Activated CD4-positive, alpha-beta T cell treated with anti-CD3 and anti-CD28 coated beads for 36 hours (primary cell): ENCODE measurements at regions of chr6 and their contacts with region 1.

Region 1: DNA sequence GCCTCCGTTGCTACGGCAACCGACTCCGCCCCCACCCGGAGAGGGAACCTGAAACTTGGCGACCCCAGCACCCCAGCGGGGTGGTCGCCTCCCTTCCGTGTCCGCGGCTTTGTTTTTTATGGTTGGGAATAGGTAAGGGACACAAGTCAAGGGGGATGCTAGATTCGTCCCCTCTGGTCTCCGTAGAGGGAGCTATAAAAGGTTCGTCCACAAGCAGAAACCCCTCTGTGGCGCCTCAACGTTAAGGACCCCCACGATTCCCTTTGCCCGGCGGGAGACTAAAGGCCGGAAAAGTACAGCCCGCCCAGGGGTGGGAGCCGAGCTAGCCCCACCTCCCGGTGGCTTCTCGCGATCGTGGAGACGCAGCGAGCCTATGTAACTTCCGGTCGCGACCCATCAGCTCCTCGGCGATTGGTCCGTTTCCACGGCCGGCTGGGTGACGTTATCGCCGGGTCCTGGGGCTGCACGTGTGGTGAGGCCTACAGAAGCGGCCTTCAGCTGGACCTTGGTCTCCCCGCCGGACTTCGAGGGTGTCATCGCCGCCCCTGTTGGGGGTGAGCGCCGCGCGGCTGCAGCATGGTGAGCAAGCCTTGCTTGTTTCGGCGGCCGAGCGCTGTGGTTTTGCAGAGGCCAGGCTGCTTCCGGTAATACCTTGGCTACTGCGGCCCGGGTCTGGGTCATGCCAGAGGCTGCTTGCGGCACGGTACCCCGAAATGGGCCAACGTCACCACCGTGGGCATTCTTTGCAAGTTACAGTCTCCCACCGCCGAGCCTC is at the start of gene LTV1:
- DNase-seq: peak; percentile 96
- ATAC-seq: peak; percentile 99
- H3K4me3 Mint-ChIP-seq: peak within 1 kb of the TSS; percentile 93
- H3K27ac Mint-ChIP-seq: peak within 1 kb of the TSS; percentile 96
- H3K4me1 Mint-ChIP-seq: peaks cover 34% of the 10 kb centered on the region
- H3K27me3 Mint-ChIP-seq: no peaks in the 10 kb centered on the region
- total RNA-seq, gene LTV1: 34.3 to 36.3 TPM

Region 2: GRCh38 chr6:142146828-142147662 is 1696.0 kb before region 1 on chr6 and contains the starts of genes NMBR and VTA1:
- CTCF ChIA-PET with region 1: no interaction called
- POLR2A ChIA-PET with region 1: no interaction called
- intact Hi-C with region 1: loop called in 1 of 2 experiments (anchors 5 kb)
- DNase-seq: peak; percentile 98
- ATAC-seq: peak; percentile 98
- H3K4me3 Mint-ChIP-seq: peak within 1 kb of the TSS; percentile 97
- H3K27ac Mint-ChIP-seq: peak within 1 kb of the TSS; percentile 95
- H3K4me1 Mint-ChIP-seq: peaks cover 56% of the 10 kb centered on the region
- H3K27me3 Mint-ChIP-seq: no peaks in the 10 kb centered on the region
- total RNA-seq, gene NMBR: not detected
- total RNA-seq, gene VTA1: 55.6 to 73.9 TPM

Region 3: GRCh38 chr6:143510991-143511891 is 331.8 kb before region 1 on chr6 and contains the start of gene FUCA2:
- CTCF ChIA-PET with region 1: interaction called, 3 read pairs
- POLR2A ChIA-PET with region 1: no interaction called
- intact Hi-C with region 1: loop called in 1 of 2 experiments (anchors 2 kb)
- DNase-seq: peak; percentile 80
- ATAC-seq: peak; percentile 85
- H3K4me3 Mint-ChIP-seq: peak within 1 kb of the TSS; percentile 84
- H3K27ac Mint-ChIP-seq: peak within 1 kb of the TSS; percentile 91
- H3K4me1 Mint-ChIP-seq: peaks cover 22% of the 10 kb centered on the region
- H3K27me3 Mint-ChIP-seq: no peaks in the 10 kb centered on the region
- total RNA-seq, gene FUCA2: 6.7 to 7.8 TPM

Region 4: DNA sequence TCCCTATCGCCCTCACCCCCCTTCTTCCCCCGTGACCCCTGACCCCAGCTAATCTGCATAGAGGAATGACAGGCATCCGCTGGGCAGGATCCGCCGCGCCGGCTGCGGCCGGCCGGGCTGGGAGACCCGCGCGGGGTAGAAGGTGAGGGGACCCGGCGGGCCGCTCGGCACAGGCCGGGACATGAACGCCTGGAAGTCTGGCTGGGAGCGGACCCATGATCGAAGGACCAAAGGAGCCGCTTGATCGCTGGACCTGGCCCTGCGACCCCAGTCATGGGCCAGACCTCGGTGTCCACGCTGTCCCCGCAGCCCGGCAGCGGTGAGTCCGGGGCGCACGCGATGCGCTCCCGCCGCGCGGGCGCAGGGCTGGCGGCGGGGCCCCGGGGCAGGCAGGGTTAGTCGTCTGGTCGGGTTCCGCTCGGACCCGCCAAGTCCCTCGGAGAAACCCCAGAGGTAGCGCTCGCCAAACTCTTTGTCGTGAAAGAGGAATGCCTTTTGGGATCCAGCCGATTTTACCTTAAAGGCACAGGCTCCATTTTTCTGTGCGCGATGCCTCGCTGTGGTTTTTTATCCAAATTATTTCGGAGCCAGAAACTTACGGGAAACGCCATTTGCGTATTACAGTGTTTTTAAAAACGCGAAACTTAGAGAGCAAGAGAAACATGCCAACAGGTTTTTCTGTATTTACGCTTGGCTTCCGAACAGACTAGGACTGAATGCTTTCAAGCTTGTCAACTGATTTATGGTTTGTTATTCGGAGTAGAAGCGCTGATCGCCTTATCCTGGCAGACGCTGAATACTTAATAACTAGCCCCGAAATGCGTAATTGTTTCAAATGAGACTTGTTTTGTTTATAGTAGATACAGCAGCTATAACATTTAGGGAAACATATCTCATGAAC is 164.9 kb before region 1 on chr6 and contains the start of gene PHACTR2:
- CTCF ChIA-PET with region 1: no interaction called
- POLR2A ChIA-PET with region 1: no interaction called
- intact Hi-C with region 1: loop called (anchors 2 to 5 kb)
- DNase-seq: peak; percentile 80
- ATAC-seq: peak; percentile 90
- H3K4me3 Mint-ChIP-seq: peak within 1 kb of the TSS; percentile 77
- H3K27ac Mint-ChIP-seq: peak within 1 kb of the TSS; percentile 74
- H3K4me1 Mint-ChIP-seq: peaks cover 22% of the 10 kb centered on the region
- H3K27me3 Mint-ChIP-seq: peaks cover 2% of the 10 kb centered on the region
- total RNA-seq, gene PHACTR2: 21.2 to 27.0 TPM

Region 5: DNA sequence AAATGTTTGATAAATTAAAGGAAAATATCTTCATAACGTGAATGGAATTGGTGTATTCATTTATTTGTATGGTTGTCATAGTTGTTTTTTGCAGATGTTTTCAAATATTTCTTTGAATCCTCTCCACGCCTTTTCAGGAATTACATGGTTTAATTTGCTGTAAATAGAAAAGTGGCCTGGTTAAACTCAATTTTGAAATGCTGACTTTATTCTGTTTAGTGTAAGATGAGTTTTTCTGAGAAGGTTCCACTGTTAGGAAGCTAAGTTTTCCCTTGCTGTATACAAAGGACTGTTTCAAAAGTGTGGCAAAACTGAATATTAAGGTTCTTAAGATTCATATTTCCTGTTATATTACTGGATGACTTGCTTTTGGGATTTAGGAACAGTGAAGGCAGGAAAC is 20.7 kb after region 1 on chr6:
- CTCF ChIA-PET with region 1: interaction called, 3 read pairs
- POLR2A ChIA-PET with region 1: interaction called, 3 read pairs
- intact Hi-C with region 1: loop called in 1 of 2 experiments (anchors 2 kb)
- DNase-seq: no peak
- ATAC-seq: no peak
- H3K4me3 Mint-ChIP-seq: no peak overlapping the region
- H3K27ac Mint-ChIP-seq: no peak overlapping the region
- H3K4me1 Mint-ChIP-seq: no peaks in the 10 kb centered on the region
- H3K27me3 Mint-ChIP-seq: no peaks in the 10 kb centered on the region

Region 6: GRCh38 chr6:144063744-144064401 is 220.8 kb after region 1 on chr6:
- CTCF ChIA-PET with region 1: interaction called, 3 read pairs
- POLR2A ChIA-PET with region 1: interaction called, 4 read pairs
- intact Hi-C with region 1: loop called in 1 of 2 experiments (anchors 1 kb)
- DNase-seq: peak; percentile 93
- ATAC-seq: peak; percentile 90
- H3K4me3 Mint-ChIP-seq: peak overlapping the region; percentile 81
- H3K27ac Mint-ChIP-seq: peak overlapping the region; percentile 80
- H3K4me1 Mint-ChIP-seq: peaks cover 46% of the 10 kb centered on the region
- H3K27me3 Mint-ChIP-seq: peaks cover 11% of the 10 kb centered on the region

Region 7: GRCh38 chr6:144149891-144150709 is 307.0 kb after region 1 on chr6 and contains the start of gene STX11:
- CTCF ChIA-PET with region 1: no interaction called
- POLR2A ChIA-PET with region 1: no interaction called
- intact Hi-C with region 1: loop called in 1 of 2 experiments (anchors 1 kb)
- DNase-seq: peak; percentile 91
- ATAC-seq: peak; percentile 80
- H3K4me3 Mint-ChIP-seq: peak within 1 kb of the TSS; percentile 84
- H3K27ac Mint-ChIP-seq: peak within 1 kb of the TSS; percentile 95
- H3K4me1 Mint-ChIP-seq: peaks cover 41% of the 10 kb centered on the region
- H3K27me3 Mint-ChIP-seq: peaks cover 5% of the 10 kb centered on the region
- total RNA-seq, gene STX11: 19.6 to 20.9 TPM

Region 8: GRCh38 chr6:144195679-144196270 is 352.7 kb after region 1 on chr6:
- CTCF ChIA-PET with region 1: no interaction called
- POLR2A ChIA-PET with region 1: no interaction called
- intact Hi-C with region 1: no loop called
- DNase-seq: no peak
- ATAC-seq: no peak
- H3K4me3 Mint-ChIP-seq: no peak overlapping the region
- H3K27ac Mint-ChIP-seq: no peak overlapping the region
- H3K4me1 Mint-ChIP-seq: peaks cover 4% of the 10 kb centered on the region
- H3K27me3 Mint-ChIP-seq: no peaks in the 10 kb centered on the region